ENCODE measurements at regions of chr2 and their contacts with region 1.

Region 1: DNA sequence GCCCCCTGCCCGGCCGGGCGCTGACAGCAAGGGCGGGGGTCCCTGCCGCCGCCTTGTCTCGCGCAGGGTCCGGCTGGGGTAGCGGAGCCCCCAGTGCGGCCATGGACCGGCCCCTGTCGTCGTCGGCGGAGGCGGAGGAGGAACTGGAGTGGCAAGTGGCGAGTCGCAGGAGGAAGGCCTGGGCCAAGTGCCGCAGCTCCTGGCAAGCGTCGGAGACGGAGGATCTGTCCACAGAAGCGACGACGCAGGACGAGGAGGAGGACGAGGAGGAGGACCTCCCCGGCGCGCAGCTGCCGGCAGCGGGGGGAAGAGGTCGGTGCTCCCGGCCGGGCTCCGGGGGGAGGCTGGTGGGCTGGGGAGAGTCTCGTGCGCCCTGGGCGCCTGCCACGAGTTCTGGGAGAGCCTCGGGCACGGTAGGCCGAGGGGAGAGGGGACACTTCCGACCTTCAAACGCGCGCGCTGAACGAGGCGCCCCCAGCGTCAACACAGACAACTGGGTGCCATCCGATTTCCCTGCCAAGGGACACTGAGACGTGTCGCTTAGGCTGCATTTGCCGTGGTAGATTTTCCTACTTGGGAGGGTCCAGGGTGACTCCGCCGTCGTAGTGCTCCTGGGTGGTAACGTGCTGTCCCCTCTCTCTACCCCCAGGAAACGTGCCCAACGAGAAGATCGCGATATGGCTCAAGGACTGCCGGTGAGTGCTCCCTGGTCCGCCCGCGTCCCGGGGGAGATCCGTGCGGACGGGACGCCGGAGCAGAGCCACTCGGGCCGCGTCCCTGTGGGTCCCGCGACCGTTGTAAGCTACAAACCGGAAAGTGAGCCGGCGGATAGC is 652 bp downstream of the ITPRID2 start:
- DNase-seq: peak; percentile 78 to 88
- H3K4me3 ChIP-seq: peak overlapping the region; percentile 88
- H3K27ac ChIP-seq: peak overlapping the region; percentile 82
- H3K4me1 ChIP-seq: peaks cover 49% of the 10 kb centered on the region
- H3K27me3 ChIP-seq: no peaks in the 10 kb centered on the region
- CTCF ChIP-seq: peak; percentile 41; the same call in 1 of the 2 replicates

Region 2: DNA sequence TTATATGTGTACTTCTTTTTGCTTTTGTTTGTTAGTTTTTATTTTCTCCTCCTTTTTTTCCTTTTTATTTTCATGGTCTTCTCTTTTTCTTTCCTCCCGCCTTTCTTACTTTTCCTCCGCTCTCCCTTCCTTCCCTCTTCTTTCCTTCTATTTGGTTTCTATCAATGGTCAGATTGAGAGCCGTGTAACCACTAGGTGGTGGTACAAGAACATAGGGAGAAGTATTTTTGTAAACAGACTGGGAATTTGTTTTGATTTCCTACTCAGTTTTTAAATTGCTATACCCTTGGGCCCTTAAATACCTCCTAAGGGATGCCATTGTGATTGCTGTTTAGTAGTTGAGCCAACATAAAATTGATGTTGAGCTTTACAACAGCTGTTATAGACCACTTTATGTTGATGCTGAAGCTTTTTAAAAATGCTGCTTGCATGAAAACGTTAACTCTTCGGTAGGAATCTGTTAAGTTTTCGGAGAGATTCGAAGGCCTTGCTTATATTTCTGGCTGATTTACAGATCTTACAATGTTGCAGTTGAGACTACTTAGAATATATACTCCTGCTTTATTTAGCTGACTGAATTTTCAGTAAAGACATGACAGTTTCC is 787.6 kb before region 1 on chr2:
- CTCF ChIA-PET with region 1: no interaction called
- POLR2A ChIA-PET with region 1: no interaction called
- intact Hi-C with region 1: loop called (anchors 10 kb)
- DNase-seq: peak in 1 of 2 experiments; percentile 28
- H3K4me3 ChIP-seq: no peak overlapping the region
- H3K27ac ChIP-seq: no peak overlapping the region
- H3K4me1 ChIP-seq: peaks cover 27% of the 10 kb centered on the region
- H3K27me3 ChIP-seq: no peaks in the 10 kb centered on the region
- CTCF ChIP-seq: peak; percentile 90

Region 3: GRCh38 chr2:181742922-181743722 is 149.1 kb before region 1 on chr2:
- CTCF ChIA-PET with region 1: interaction called, 3 read pairs
- POLR2A ChIA-PET with region 1: interaction called, 4 read pairs
- intact Hi-C with region 1: loop called (anchors 1 kb)
- DNase-seq: peak; percentile 50 to 59
- H3K4me3 ChIP-seq: no peak overlapping the region
- H3K27ac ChIP-seq: no peak overlapping the region
- H3K4me1 ChIP-seq: peaks cover 14% of the 10 kb centered on the region
- H3K27me3 ChIP-seq: no peaks in the 10 kb centered on the region
- CTCF ChIP-seq: peak; percentile 95

Region 4: GRCh38 chr2:181790716-181791649 is 101.2 kb before region 1 on chr2:
- CTCF ChIA-PET with region 1: no interaction called
- POLR2A ChIA-PET with region 1: no interaction called
- intact Hi-C with region 1: loop called (anchors 1 kb)
- DNase-seq: peak; percentile 60 to 100
- H3K4me3 ChIP-seq: peak overlapping the region; percentile 5; the same call in 1 of the 2 replicates
- H3K27ac ChIP-seq: peak overlapping the region; percentile 94
- H3K4me1 ChIP-seq: peaks cover 57% of the 10 kb centered on the region
- H3K27me3 ChIP-seq: no peaks in the 10 kb centered on the region
- CTCF ChIP-seq: no peak

Region 5: GRCh38 chr2:181946498-181947127 is 54.4 kb after region 1 on chr2:
- CTCF ChIA-PET with region 1: no interaction called
- POLR2A ChIA-PET with region 1: no interaction called
- intact Hi-C with region 1: loop called (anchors 1 kb)
- DNase-seq: peak in 1 of 2 experiments; percentile 70
- H3K4me3 ChIP-seq: 0 out of 2 replicates have a peak overlapping the region, but pooled peaks have one; percentile 2
- H3K27ac ChIP-seq: peak overlapping the region; percentile 48
- H3K4me1 ChIP-seq: peaks cover 45% of the 10 kb centered on the region
- H3K27me3 ChIP-seq: no peaks in the 10 kb centered on the region
- CTCF ChIP-seq: no peak

Region 6: GRCh38 chr2:182077451-182078142 is 185.4 kb after region 1 on chr2:
- CTCF ChIA-PET with region 1: no interaction called
- POLR2A ChIA-PET with region 1: no interaction called
- intact Hi-C with region 1: loop called (anchors 5 kb)
- DNase-seq: peak; percentile 47 to 76
- H3K4me3 ChIP-seq: no peak overlapping the region
- H3K27ac ChIP-seq: no peak overlapping the region
- H3K4me1 ChIP-seq: 0 out of 2 replicates have a peak, but pooled peaks cover 4% of the 10 kb centered on the region
- H3K27me3 ChIP-seq: no peaks in the 10 kb centered on the region
- CTCF ChIP-seq: peak; percentile 98

Measured in PC-9 (cell line).